CD8-positive, alpha-beta memory T cell (primary cell): ENCODE measurements at regions of chr9 and their contacts with region 1.

Region 1: DNA sequence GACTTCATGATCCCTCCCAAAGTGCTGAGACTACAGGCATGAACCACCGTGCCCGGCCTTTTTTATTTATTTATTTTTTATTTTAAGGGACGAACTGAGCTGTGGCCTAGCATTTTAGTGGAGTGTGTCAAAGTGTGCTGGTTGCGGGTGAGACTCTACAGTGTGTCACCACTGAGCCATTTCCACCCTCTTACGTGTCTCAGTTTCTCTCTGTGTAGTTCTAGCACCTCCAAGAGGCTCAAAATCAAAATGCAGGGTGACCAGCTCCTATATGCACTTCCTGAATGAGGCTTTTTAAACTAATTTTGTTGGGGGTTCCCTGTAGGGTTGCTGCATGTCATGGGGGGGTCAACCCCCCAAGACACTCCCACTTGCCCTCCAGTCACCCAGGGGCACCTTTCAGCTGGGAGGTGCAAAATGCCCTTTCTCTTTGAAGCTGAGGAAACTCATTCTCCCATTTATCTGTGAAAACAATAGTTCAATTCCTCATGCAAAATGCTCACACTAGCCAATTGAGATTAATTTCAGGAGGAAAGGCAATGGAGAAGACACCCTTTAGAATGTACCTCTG is 69.3 kb downstream of the COL15A1 start:
- DNase-seq: peak in 2 of 5 donors; percentile 20 to 36
- H3K4me3 ChIP-seq: no peak overlapping the region
- H3K4me3 Mint-ChIP-seq: peak overlapping the region; percentile 37 to 87 (median 79)
- H3K27ac ChIP-seq: peak overlapping the region; percentile 12
- H3K27ac Mint-ChIP-seq: peak overlapping the region; percentile 82 to 98 (median 92)
- H3K4me1 ChIP-seq: peaks cover 18% of the 10 kb centered on the region
- H3K4me1 Mint-ChIP-seq: peaks cover 25 to 35% (median 29%) of the 10 kb centered on the region in 3 donors
- H3K27me3 ChIP-seq: no peaks in the 10 kb centered on the region
- H3K27me3 Mint-ChIP-seq: no peaks in the 10 kb centered on the region

Region 2: DNA sequence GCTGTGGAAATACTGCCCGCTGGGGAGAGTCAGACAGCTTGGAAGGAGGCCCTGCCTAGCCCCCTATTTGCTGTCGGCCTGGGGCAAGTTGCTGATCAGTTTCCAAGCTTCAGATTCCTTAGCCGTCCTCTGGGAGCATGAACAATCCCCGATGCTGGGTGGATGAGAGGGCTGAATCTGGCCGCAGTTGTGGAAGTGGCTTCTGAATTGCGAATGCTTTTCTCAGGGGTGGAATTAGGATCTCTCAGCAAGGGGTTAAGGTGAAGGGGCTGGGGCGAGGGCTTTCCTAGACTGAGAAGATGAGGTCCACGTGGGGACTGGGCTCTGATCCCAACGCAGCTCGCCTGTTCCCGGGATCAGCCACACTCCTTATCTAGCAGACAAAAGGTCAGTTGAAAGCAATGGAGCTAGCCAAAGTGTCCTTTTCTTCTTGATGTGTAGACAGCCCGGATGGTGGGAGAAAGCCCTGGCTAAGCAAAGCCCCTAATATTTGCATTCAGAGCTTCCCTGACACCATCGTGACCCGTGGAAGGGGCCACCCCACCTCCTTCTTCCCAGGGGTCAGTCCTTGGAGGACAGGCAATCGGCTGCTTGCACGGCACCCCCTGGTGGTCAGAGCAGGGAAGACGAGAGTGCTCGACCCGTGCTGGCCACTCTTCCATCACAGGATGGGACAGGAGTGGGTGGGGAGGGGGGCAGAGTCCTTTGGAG is 14.4 kb before region 1 on chr9:
- CTCF ChIA-PET with region 1: interaction called, 26 read pairs
- POLR2A ChIA-PET with region 1: no interaction called
- DNase-seq: peak; percentile 29 to 67 (median 45)
- H3K4me3 ChIP-seq: no peak overlapping the region
- H3K4me3 Mint-ChIP-seq: no peak overlapping the region
- H3K27ac ChIP-seq: no peak overlapping the region
- H3K27ac Mint-ChIP-seq: peak overlapping the region in 1 of 8 donors; percentile 63
- H3K4me1 ChIP-seq: peaks cover 19% of the 10 kb centered on the region
- H3K4me1 Mint-ChIP-seq: peaks cover 13 to 24% (median 23%) of the 10 kb centered on the region in 3 donors
- H3K27me3 ChIP-seq: no peaks in the 10 kb centered on the region
- H3K27me3 Mint-ChIP-seq: peaks cover 15 to 19% of the 10 kb centered on the region in 2 donors

Region 3: DNA sequence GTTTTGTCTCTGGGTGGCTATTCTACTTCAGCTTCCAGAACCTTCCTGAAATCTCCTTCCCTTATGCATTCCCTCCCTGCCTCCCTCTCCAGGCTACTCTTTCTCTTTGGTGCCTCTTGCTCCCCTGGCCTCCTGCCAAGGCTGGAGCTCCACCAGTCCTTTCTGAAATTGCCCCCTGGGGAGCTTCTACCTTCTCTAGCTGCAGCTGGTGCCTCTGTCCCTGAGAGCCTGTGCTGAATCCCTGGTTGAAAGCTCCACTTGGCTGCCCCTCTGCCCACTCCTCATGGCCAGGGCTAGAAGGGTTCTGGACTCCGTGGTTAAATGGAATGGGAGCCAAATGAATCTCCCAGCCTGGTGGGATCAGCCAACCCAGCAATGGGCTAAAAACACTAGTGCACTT is 10.8 kb after region 1 on chr9:
- CTCF ChIA-PET with region 1: interaction called, 10 read pairs
- POLR2A ChIA-PET with region 1: no interaction called
- DNase-seq: no peak
- H3K4me3 ChIP-seq: no peak overlapping the region
- H3K4me3 Mint-ChIP-seq: no peak overlapping the region
- H3K27ac ChIP-seq: no peak overlapping the region
- H3K27ac Mint-ChIP-seq: no peak overlapping the region
- H3K4me1 ChIP-seq: peaks cover 20% of the 10 kb centered on the region
- H3K4me1 Mint-ChIP-seq: peaks cover 14 to 32% (median 25%) of the 10 kb centered on the region in 3 donors
- H3K27me3 ChIP-seq: no peaks in the 10 kb centered on the region
- H3K27me3 Mint-ChIP-seq: peaks cover 0 to 6% of the 10 kb centered on the region in 2 donors

Region 4: GRCh38 chr9:99044827-99045226 is 31.8 kb after region 1 on chr9:
- CTCF ChIA-PET with region 1: interaction called, 12 read pairs
- POLR2A ChIA-PET with region 1: no interaction called
- DNase-seq: no peak
- H3K4me3 ChIP-seq: no peak overlapping the region
- H3K4me3 Mint-ChIP-seq: no peak overlapping the region
- H3K27ac ChIP-seq: no peak overlapping the region
- H3K27ac Mint-ChIP-seq: peak overlapping the region in 1 of 8 donors; percentile 8
- H3K4me1 ChIP-seq: peaks cover 11% of the 10 kb centered on the region
- H3K4me1 Mint-ChIP-seq: peaks cover 33 to 40% (median 34%) of the 10 kb centered on the region in 3 donors
- H3K27me3 ChIP-seq: no peaks in the 10 kb centered on the region
- H3K27me3 Mint-ChIP-seq: no peaks in the 10 kb centered on the region

Region 5: GRCh38 chr9:99085949-99086948 is 73.2 kb after region 1 on chr9:
- CTCF ChIA-PET with region 1: no interaction called
- POLR2A ChIA-PET with region 1: no interaction called
- DNase-seq: no peak
- H3K4me3 ChIP-seq: no peak overlapping the region
- H3K4me3 Mint-ChIP-seq: peak overlapping the region in 4 of 7 donors; percentile 8 to 66 (median 24)
- H3K27ac ChIP-seq: no peak overlapping the region
- H3K27ac Mint-ChIP-seq: peak overlapping the region in 5 of 8 donors; percentile 9 to 61 (median 40)
- H3K4me1 ChIP-seq: peaks cover 12% of the 10 kb centered on the region
- H3K4me1 Mint-ChIP-seq: peaks cover 27 to 36% (median 27%) of the 10 kb centered on the region in 3 donors
- H3K27me3 ChIP-seq: no peaks in the 10 kb centered on the region
- H3K27me3 Mint-ChIP-seq: no peaks in the 10 kb centered on the region